Activated naive CD4-positive, alpha-beta T cell treated with anti-CD3 and anti-CD28 coated beads for 36 hours (primary cell): ENCODE measurements at regions of chr20 and their contacts with region 1.

Region 1: DNA sequence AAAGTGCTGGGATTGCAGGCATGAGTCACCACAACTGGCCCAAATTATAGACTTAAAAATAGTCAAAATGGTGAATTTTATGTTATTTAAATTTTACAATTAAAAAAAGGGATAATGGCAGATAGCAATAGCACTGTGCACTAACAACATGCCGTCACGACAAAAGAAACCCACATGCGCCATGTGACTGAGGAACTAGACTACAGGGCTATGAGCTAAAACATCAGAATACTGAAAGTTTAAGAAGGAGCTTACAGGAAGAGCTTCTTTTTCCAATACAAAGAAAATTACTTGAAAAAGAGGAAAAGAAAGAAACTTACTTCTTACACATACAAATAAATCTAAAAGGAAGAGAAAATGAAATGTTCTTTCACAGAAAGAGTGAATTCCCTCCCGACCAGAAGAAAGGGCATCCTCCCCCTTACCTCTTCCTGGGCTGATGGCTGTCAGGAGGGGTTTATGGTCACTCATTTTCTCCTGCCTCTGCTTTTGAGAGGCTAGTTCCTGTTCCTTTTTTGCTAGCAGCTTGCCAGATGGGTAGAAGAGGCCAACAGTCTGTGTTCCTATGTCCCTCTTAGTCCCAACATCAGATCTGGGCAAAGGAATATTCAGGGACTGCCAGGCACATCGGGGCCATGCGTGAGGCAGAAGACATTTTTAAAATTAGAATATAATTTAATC is 54.5 kb downstream of the DZANK1 start:
- DNase-seq: no peak
- H3K4me3 Mint-ChIP-seq: no peak overlapping the region
- H3K27ac Mint-ChIP-seq: no peak overlapping the region
- H3K4me1 Mint-ChIP-seq: peaks cover 4% of the 10 kb centered on the region
- H3K27me3 Mint-ChIP-seq: peaks cover 2% of the 10 kb centered on the region

Region 2: GRCh38 chr20:18237682-18238081 is 174.7 kb before region 1 on chr20:
- CTCF ChIA-PET with region 1: no interaction called
- intact Hi-C with region 1: no loop called
- DNase-seq: no peak
- H3K4me3 Mint-ChIP-seq: no peak overlapping the region
- H3K27ac Mint-ChIP-seq: no peak overlapping the region
- H3K4me1 Mint-ChIP-seq: no peaks in the 10 kb centered on the region
- H3K27me3 Mint-ChIP-seq: peaks cover 28% of the 10 kb centered on the region

Region 3: DNA sequence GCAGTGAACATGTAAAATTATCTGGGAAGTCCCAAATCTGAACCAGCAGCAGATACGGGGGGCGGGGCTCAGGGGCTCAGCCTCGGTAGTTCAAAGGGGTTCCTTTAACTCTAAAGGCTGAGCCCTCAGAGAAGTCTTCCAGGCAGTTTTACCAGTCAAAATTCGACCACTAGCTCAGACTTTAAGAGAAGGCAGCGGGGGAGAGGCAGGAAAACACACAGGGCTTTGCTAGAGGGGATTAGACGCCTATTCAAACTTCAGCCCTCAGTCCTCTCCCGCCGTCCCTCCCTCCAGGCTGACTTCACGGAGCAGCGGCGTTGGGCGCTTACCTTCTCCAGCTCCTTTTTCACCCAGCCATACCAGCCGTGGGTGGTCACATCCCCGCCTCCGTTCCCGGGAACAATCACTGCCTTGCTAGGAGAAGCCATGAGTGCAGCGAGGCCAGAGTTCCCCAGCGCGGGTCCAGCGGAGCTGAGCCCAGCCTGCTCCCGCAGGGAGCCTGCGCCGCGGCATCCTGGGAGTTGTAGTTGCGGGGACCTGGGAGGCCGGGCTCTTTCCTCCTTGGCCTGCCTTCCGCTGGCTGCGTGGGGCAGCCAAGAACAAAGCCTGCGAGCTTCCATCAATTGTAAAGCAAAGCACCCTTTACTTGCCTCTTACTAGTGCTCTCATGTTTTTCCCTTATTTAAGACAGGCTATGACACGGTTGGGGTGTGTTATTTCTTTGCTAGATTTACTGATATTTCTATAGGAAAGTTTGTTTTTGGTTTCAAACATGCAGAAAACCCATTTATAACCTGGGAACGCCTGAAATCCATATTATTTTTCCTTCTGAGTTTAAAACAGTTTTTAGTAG is 84.6 kb after region 1 on chr20 and contains the start of gene RBBP9:
- CTCF ChIA-PET with region 1: no interaction called
- intact Hi-C with region 1: loop called (anchors 1 kb)
- DNase-seq: peak; percentile 88
- H3K4me3 Mint-ChIP-seq: peak within 1 kb of the TSS; percentile 91
- H3K27ac Mint-ChIP-seq: peak within 1 kb of the TSS; percentile 84
- H3K4me1 Mint-ChIP-seq: peaks cover 11% of the 10 kb centered on the region
- H3K27me3 Mint-ChIP-seq: no peaks in the 10 kb centered on the region
- total RNA-seq, gene RBBP9: 17.3 to 18.1 TPM

Region 4: GRCh38 chr20:18587665-18588573 is 175.6 kb after region 1 on chr20 and contains the start of gene DTD1:
- CTCF ChIA-PET with region 1: interaction called, 4 read pairs
- intact Hi-C with region 1: loop called (anchors 2 kb)
- DNase-seq: peak; percentile 89
- H3K4me3 Mint-ChIP-seq: peak within 1 kb of the TSS; percentile 87
- H3K27ac Mint-ChIP-seq: peak within 1 kb of the TSS; percentile 59
- H3K4me1 Mint-ChIP-seq: peaks cover 23% of the 10 kb centered on the region
- H3K27me3 Mint-ChIP-seq: no peaks in the 10 kb centered on the region
- total RNA-seq, gene DTD1: 46.4 to 47.1 TPM

Region 5: GRCh38 chr20:18805881-18806280 is 393.5 kb after region 1 on chr20:
- CTCF ChIA-PET with region 1: no interaction called
- intact Hi-C with region 1: loop called (anchors 2 kb)
- DNase-seq: no peak
- H3K4me3 Mint-ChIP-seq: no peak overlapping the region
- H3K27ac Mint-ChIP-seq: no peak overlapping the region
- H3K4me1 Mint-ChIP-seq: peaks cover 17% of the 10 kb centered on the region
- H3K27me3 Mint-ChIP-seq: no peaks in the 10 kb centered on the region

Region 6: GRCh38 chr20:19583532-19584175 is 1171.3 kb after region 1 on chr20:
- CTCF ChIA-PET with region 1: interaction called, 3 read pairs
- intact Hi-C with region 1: loop called (anchors 10 kb)
- DNase-seq: peak; percentile 66
- H3K4me3 Mint-ChIP-seq: no peak overlapping the region
- H3K27ac Mint-ChIP-seq: no peak overlapping the region
- H3K4me1 Mint-ChIP-seq: no peaks in the 10 kb centered on the region
- H3K27me3 Mint-ChIP-seq: no peaks in the 10 kb centered on the region